Sigmoid colon (tissue), 7 donors: ENCODE measurements at regions of chr1 and their contacts with region 1.

Region 1: GRCh38 chr1:228734881-228735801 is at the start of gene RHOU:
- DNase-seq: peak; percentile 89
- H3K4me3 ChIP-seq: peak within 1 kb of the TSS; percentile 94 to 96 (median 96)
- H3K27ac ChIP-seq: peak within 1 kb of the TSS; percentile 87 to 97 (median 92)
- H3K4me1 ChIP-seq: peaks cover 0 to 24% (median 12%) of the 10 kb centered on the region in 4 donors
- H3K27me3 ChIP-seq: no peaks in the 10 kb centered on the region
- CTCF ChIP-seq: peak in 3 of 4 experiments; percentile 7 to 91 (median 52)
- EP300 ChIP-seq: no peak
- POLR2A ChIP-seq: peak; percentile 47 to 48
- total RNA-seq, gene RHOU: 9.7 to 24.6 (median 15.1) TPM

Region 2: DNA sequence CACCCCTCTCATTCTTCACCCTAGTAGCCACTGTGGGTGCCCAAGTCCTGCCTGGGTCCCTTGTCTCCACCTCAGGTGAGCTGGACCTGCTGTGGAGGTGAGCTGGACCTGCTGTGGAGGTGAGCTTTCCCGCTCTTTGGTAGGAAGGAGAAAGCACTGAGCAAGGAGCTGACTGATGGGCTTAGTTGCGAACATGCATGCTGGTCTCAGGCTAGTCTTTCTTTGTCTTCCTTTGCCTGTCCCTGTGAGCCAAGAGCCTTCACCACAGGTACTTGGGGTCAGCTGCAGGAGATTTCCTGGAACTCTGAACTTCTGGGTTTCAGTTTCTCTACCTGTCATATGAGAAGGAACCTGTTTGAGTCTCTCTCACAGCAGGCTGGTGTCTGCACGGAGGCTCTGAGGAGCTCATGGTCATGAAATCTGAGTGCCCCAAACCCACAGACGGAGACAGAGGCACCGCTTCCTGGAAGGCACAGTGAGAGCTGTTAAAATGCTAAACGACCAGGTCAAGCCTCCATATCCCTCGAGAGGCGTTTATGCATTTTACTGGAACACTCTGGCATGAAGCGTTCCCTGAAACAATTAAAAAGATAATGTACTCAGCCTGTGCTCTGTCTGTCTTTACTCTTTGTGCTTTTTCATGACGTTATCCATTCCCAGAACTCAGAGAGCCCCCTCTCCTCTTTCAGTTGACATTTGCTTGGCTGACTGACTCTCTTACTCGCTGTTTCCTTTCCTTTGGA is 69.7 kb after region 1 on chr1:
- intact Hi-C with region 1: loop called (anchors 2 kb)
- DNase-seq: no peak
- H3K4me3 ChIP-seq: no peak overlapping the region
- H3K27ac ChIP-seq: peak overlapping the region in 3 of 4 donors; percentile 15 to 83 (median 47)
- H3K4me1 ChIP-seq: peaks cover 0 to 54% (median 45%) of the 10 kb centered on the region in 4 donors
- H3K27me3 ChIP-seq: no peaks in the 10 kb centered on the region
- CTCF ChIP-seq: no peak
- EP300 ChIP-seq: peak in 2 of 4 donors; percentile 73 to 82
- POLR2A ChIP-seq: no peak

Region 3: GRCh38 chr1:228902781-228903433 is 167.8 kb after region 1 on chr1:
- intact Hi-C with region 1: loop called (anchors 2 kb)
- DNase-seq: peak; percentile 95
- H3K4me3 ChIP-seq: no peak overlapping the region
- H3K27ac ChIP-seq: peak overlapping the region; percentile 42 to 81 (median 69)
- H3K4me1 ChIP-seq: peaks cover 0 to 46% (median 43%) of the 10 kb centered on the region in 4 donors
- H3K27me3 ChIP-seq: no peaks in the 10 kb centered on the region
- CTCF ChIP-seq: no peak
- EP300 ChIP-seq: no peak
- POLR2A ChIP-seq: no peak

Region 4: DNA sequence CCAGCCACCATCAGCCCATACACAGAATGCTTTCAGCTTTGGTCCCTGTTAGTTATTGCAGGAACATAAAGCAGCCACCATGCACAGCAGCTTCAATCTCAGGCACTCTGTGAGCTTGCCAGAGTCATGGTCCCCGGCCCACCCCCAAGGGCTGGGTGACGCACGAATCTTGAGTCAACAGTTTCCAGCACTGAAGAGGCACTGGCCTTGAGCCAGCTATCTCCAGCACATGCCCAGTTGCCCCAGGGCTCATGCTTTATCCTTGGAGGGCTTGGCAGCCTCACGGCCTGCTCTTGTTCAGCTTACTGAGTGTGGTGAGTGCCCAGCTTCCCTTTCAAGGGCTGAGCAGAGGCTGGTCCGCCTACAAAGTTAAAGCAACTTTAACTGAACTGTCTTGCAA is 335.0 kb after region 1 on chr1:
- intact Hi-C with region 1: loop called (anchors 5 kb)
- DNase-seq: peak; percentile 98
- H3K4me3 ChIP-seq: no peak overlapping the region
- H3K27ac ChIP-seq: peak overlapping the region; percentile 15 to 75 (median 65)
- H3K4me1 ChIP-seq: peaks cover 0 to 22% (median 17%) of the 10 kb centered on the region in 4 donors
- H3K27me3 ChIP-seq: no peaks in the 10 kb centered on the region
- CTCF ChIP-seq: no peak
- EP300 ChIP-seq: peak; percentile 36 to 88 (median 76)
- POLR2A ChIP-seq: no peak

Region 5: DNA sequence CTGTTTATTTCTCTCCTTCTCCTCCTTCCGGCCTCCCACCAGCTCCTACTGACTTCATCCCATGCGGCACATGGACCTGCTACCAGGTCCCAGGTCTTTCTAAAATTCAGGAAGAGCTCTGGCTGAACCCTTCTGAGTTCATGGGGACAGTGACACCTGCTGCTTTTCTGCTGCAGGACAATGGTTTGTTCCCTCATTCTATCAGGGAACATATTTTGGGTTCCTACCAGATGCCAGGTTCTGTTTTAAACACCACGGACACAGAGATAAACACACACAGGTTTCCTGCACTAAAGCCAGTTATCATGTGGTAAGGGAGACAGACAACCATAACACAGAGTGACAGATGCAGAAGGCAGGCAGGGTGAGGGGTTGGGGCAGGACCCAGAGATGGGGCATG is 421.7 kb after region 1 on chr1:
- intact Hi-C with region 1: loop called (anchors 1 kb)
- DNase-seq: peak; percentile 75
- H3K4me3 ChIP-seq: no peak overlapping the region
- H3K27ac ChIP-seq: peak overlapping the region in 1 of 4 donors; percentile 33
- H3K4me1 ChIP-seq: peaks cover 0 to 24% (median 0%) of the 10 kb centered on the region in 4 donors
- H3K27me3 ChIP-seq: no peaks in the 10 kb centered on the region
- CTCF ChIP-seq: peak; percentile 42 to 62 (median 48)
- EP300 ChIP-seq: no peak
- POLR2A ChIP-seq: no peak